Cardiac septum (tissue), 1 donor: ENCODE measurements at regions of chr5 and their contacts with region 1.

Region 1: DNA sequence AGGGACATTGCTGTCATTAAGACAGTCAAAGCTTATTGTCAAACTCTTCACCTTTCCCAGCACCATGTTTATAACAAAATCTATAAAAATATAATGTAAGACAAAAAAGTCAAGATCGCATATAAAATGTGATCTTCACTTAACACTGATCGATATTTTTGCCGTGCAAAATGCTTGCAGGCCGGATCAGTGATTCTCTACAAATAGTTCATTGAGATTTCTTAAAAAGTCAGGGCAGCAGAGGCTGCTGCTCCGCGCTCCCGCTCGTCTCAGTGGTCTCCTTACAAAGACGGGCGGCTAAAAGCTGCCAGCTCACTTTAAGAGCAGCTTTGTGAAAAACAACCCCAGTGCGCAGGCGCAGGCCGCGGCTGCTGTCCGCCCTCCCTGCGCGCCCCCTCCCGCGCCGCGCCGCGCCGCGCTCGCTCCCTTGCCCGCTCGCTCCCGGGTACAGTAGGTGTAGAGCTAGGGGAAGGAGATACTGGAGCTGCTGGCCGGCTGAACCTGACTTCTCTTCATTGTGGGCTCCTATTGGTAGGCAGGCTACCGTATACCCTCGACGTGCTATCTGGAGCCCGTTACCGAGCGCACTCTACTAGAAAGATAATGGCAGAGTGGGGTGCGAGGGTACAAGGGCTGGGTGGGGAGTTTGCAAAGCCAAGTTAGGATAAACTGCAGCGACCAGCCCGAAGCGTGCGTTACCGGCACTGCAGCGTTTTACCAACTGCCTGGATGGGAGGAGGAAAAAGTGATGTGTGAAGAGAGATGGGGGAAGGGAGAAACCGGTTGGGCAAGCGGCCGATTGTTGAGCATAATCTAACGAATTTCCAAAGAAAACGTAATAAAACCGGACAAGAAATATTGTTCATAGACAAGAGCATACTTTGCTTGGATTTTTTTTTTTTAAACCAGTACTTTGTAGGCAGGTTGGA is at the start of gene ARRDC3:
- DNase-seq: peak; percentile 99
- total RNA-seq, gene ARRDC3: 20.1 TPM

Region 2: GRCh38 chr5:90866333-90866732 is 517.0 kb before region 1 on chr5:
- intact Hi-C with region 1: loop called (anchors 5 kb)
- DNase-seq: no peak

Region 3: DNA sequence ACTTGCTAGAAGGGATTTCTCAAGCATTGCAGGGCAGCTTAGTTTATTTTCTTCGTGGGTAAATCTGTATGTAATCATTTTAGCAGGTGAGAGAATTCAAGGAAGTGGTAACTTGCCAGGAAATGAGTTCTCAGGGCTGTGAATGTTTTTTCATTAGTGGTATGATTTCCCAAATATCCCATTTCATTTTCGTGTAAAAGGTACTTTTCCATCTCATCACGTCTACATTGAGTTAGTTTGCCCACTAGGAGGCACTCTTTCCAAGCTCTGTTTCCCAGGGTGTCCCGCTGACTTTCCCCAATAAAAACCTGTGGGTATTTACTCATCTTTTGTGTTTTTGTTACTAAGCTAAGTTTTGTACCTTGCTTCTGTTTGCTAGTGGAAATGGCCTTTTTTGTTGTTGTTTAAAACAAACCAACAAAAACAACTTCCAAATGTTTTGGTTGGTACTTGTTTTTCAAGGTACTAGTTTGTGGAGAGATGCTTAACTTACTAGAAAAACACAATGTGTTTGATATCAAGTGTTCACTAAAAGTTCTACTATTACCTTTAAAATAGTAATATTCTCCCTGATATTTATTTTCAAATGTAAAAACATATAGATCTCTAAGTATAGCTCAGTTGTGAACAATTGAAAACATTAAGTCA is 451.1 kb before region 1 on chr5:
- intact Hi-C with region 1: loop called (anchors 2 kb)
- DNase-seq: no peak

Region 4: DNA sequence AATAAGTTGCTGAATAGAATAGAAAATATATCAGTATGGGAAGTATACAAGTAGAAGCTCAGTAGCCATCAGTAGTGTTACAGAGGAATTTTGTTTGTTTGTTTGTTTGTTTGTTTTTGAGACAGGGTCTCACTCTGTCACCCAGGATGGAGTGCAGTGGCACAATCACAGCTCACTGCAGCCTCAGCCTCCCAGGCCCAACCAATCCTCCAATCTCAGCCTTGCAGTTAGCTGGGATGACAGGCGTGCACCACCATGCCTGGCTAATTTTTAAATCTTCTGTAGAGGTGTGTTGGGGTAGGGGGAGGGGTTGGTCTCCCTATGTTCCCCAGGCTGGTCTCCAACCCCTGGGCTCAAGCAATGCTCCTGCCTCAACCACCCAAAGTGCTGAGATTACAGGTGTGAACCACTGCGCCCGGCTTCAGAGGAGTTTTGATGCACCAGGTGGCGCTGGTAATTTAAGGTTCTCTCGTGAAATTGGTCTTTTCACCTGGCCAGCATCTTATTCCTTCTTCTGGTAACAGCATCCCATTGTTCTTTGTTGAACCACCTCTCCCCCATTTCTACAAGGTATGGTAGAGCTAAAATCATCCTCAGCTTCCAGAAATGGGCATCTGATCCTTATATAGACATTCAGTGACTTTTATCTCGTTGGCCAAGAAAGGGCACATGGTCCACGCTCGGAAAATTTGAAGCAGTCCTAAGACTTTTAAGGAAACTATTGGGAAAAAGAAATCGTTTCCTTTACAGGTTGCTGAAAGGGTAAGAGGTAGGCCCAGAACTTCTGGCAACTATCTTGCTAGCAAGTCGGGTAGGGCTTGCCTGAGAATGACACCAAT is 157.2 kb before region 1 on chr5:
- intact Hi-C with region 1: loop called (anchors 2 kb)
- DNase-seq: peak; percentile 74

Region 5: DNA sequence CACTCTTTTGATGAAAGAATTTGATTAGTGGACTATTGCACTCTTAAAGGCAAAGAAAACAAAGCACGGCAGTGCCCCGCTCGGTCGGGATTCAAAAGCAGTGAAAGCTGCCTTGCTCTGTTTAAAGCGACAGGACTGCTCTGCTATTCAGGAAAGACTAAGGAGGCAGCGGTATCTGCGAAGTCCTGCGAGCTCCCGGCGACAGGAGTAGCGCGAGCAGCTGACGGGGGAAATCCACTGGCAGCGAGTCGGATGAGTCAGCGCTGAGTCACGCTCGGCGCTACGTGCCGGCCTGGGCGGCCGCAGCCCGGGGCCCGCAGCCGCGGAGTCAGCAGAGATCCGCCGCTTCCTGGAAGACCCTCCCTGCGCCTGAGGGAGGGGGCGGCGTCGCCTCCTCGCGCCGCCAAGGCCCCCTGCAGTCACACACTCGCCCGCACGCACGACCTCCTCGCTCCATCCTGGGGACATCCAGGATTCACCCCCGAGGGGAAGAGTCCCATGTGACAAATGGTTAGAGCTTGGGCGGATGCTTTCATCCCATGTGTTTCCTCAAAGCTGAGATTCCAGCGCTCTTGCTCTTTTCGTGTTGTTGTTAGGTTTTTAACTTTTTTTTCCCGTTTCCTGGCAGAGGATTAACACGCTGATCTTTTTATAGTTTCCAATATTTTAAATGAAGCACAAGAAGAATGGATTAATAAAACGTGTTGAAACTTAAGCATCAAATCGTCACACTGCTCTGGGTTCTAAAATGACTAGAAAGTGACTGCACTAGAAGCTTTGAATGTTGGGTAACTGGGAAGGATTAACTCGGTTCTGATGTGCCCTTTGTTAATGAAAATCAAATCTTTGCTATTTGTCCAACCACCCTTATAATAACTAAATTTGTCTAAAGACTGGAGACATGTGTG is 102.7 kb before region 1 on chr5:
- intact Hi-C with region 1: loop called (anchors 1 kb)
- DNase-seq: peak; percentile 98

Region 6: DNA sequence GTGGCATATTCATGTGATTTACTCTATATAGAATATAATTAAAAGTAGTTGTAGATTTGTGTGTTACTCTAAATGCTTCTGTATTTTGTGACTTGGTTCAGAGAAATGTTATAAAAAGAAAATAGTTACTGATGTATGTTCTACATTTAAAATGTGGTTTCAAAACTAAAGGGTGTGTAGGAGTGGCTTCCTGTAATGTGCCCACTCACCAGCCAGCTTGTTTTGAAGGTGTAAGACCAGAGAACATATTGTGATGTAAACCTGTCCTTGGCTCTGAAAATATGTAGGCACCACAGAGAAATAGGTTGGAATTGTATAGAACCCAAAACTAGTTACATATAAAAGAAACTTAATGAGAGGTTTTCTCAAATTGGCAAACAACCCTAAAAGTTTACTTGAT is 51.1 kb after region 1 on chr5:
- intact Hi-C with region 1: no loop called
- DNase-seq: no peak